CD8-positive, alpha-beta T cell (primary cell): ENCODE measurements at regions of chr6 and their contacts with region 1.

Region 1: GRCh38 chr6:80411486-80411885 is 305.0 kb downstream of the BCKDHB start:
- DNase-seq: peak in 1 of 9 experiments; percentile 36
- ATAC-seq: no peak
- H3K4me3 ChIP-seq: no peak overlapping the region
- H3K4me3 Mint-ChIP-seq: no peak overlapping the region
- H3K27ac ChIP-seq: no peak overlapping the region
- H3K27ac Mint-ChIP-seq: no peak overlapping the region
- H3K4me1 ChIP-seq: no peaks in the 10 kb centered on the region
- H3K4me1 Mint-ChIP-seq: no peaks in the 10 kb centered on the region
- H3K27me3 ChIP-seq: no peaks in the 10 kb centered on the region
- H3K27me3 Mint-ChIP-seq: no peaks in the 10 kb centered on the region
- CTCF ChIP-seq: no peak

Region 2: GRCh38 chr6:79657238-79657637 is 754.2 kb before region 1 on chr6:
- CTCF ChIA-PET with region 1: no interaction called
- POLR2A ChIA-PET with region 1: no interaction called
- intact Hi-C with region 1: loop called in 1 of 2 experiments (anchors 5 kb)
- DNase-seq: no peak
- ATAC-seq: no peak
- H3K4me3 ChIP-seq: no peak overlapping the region
- H3K4me3 Mint-ChIP-seq: no peak overlapping the region
- H3K27ac ChIP-seq: no peak overlapping the region
- H3K27ac Mint-ChIP-seq: no peak overlapping the region
- H3K4me1 ChIP-seq: peaks cover 11% of the 10 kb centered on the region
- H3K4me1 Mint-ChIP-seq: peaks cover 7% of the 10 kb centered on the region
- H3K27me3 ChIP-seq: no peaks in the 10 kb centered on the region
- H3K27me3 Mint-ChIP-seq: peaks cover 4% of the 10 kb centered on the region
- CTCF ChIP-seq: no peak